Left ventricle myocardium inferior (tissue), 1 donor: ENCODE measurements at regions of chr5 and their contacts with region 1.

Region 1: GRCh38 chr5:154060606-154061005 is 21.8 kb downstream of the MFAP3 start:
- DNase-seq: no peak
- H3K4me3 ChIP-seq: no peak overlapping the region
- H3K27ac ChIP-seq: no peak overlapping the region
- H3K4me1 ChIP-seq: peaks cover 25% of the 10 kb centered on the region
- H3K27me3 ChIP-seq: no peaks in the 10 kb centered on the region
- CTCF ChIP-seq: no peak

Region 2: GRCh38 chr5:153981905-153982605 is 78.6 kb before region 1 on chr5:
- intact Hi-C with region 1: loop called (anchors 10 kb)
- DNase-seq: no peak
- H3K4me3 ChIP-seq: no peak overlapping the region
- H3K27ac ChIP-seq: no peak overlapping the region
- H3K4me1 ChIP-seq: no peaks in the 10 kb centered on the region
- H3K27me3 ChIP-seq: peaks cover 5% of the 10 kb centered on the region
- CTCF ChIP-seq: no peak